CD4-positive, alpha-beta T cell (primary cell): ENCODE measurements at regions of chr4 and their contacts with region 1.

Region 1: GRCh38 chr4:99413140-99413539 is 22.0 kb downstream of the ADH7 start:
- DNase-seq: no peak
- ATAC-seq: no peak
- H3K4me3 ChIP-seq: no peak overlapping the region
- H3K4me3 Mint-ChIP-seq: no peak overlapping the region
- H3K27ac ChIP-seq: no peak overlapping the region
- H3K27ac Mint-ChIP-seq: no peak overlapping the region
- H3K4me1 ChIP-seq: no peaks in the 10 kb centered on the region
- H3K4me1 Mint-ChIP-seq: no peaks in the 10 kb centered on the region
- H3K27me3 ChIP-seq: no peaks in the 10 kb centered on the region
- H3K27me3 Mint-ChIP-seq: no peaks in the 10 kb centered on the region
- CTCF ChIP-seq: no peak

Region 2: GRCh38 chr4:98166025-98166730 is 1247.0 kb before region 1 on chr4:
- CTCF ChIA-PET with region 1: no interaction called
- POLR2A ChIA-PET with region 1: no interaction called
- intact Hi-C with region 1: no loop called
- DNase-seq: no peak
- ATAC-seq: no peak
- H3K4me3 ChIP-seq: no peak overlapping the region
- H3K4me3 Mint-ChIP-seq: no peak overlapping the region
- H3K27ac ChIP-seq: no peak overlapping the region
- H3K27ac Mint-ChIP-seq: no peak overlapping the region
- H3K4me1 ChIP-seq: no peaks in the 10 kb centered on the region
- H3K4me1 Mint-ChIP-seq: no peaks in the 10 kb centered on the region
- H3K27me3 ChIP-seq: no peaks in the 10 kb centered on the region
- H3K27me3 Mint-ChIP-seq: peaks cover 4% of the 10 kb centered on the region
- CTCF ChIP-seq: no peak

Region 3: DNA sequence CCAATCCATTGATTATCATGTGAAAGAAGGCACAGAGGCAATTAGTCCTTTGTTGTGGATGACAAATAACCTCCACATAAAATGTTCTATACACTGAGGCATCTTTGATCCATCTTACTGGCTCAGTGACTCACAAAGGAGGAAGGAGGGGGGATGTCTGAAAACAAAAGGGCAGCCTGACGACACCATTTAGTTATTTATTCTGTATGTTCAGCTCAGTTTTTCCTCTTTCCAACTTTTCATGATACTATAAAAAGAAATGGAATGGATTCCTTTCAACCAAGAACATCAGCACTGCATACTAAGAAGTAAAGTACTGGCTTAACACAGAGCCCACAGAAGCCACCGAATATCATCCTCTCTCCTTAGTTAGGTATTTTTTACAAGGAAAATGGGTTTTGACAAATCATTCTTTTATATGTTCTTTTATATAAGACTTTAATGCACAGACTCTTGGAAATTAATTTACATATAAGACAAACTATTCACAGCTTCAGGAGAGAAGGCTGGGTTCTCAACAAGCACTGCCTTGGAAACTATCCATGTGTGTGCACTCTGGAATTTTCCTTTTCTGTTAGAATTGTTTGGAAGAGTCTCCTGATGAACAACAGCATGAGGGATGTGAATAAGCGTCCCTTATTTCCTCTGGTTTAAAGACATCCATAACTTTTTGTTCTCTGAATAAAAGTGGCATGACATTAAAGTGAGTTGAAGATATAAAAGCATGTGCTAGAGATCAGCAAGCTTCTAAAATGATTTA is 890.3 kb before region 1 on chr4:
- CTCF ChIA-PET with region 1: no interaction called
- POLR2A ChIA-PET with region 1: no interaction called
- intact Hi-C with region 1: no loop called
- DNase-seq: no peak
- ATAC-seq: no peak
- H3K4me3 ChIP-seq: no peak overlapping the region
- H3K4me3 Mint-ChIP-seq: no peak overlapping the region
- H3K27ac ChIP-seq: no peak overlapping the region
- H3K27ac Mint-ChIP-seq: peak overlapping the region; percentile 54
- H3K4me1 ChIP-seq: peaks cover 10% of the 10 kb centered on the region
- H3K4me1 Mint-ChIP-seq: peaks cover 67% of the 10 kb centered on the region
- H3K27me3 ChIP-seq: no peaks in the 10 kb centered on the region
- H3K27me3 Mint-ChIP-seq: no peaks in the 10 kb centered on the region
- CTCF ChIP-seq: no peak

Region 4: GRCh38 chr4:99447079-99447478 is 33.9 kb after region 1 on chr4:
- CTCF ChIA-PET with region 1: no interaction called
- POLR2A ChIA-PET with region 1: no interaction called
- intact Hi-C with region 1: loop called in 1 of 2 experiments (anchors 1 kb)
- DNase-seq: no peak
- ATAC-seq: no peak
- H3K4me3 ChIP-seq: no peak overlapping the region
- H3K4me3 Mint-ChIP-seq: no peak overlapping the region
- H3K27ac ChIP-seq: no peak overlapping the region
- H3K27ac Mint-ChIP-seq: no peak overlapping the region
- H3K4me1 ChIP-seq: no peaks in the 10 kb centered on the region
- H3K4me1 Mint-ChIP-seq: no peaks in the 10 kb centered on the region
- H3K27me3 ChIP-seq: no peaks in the 10 kb centered on the region
- H3K27me3 Mint-ChIP-seq: peaks cover 7% of the 10 kb centered on the region
- CTCF ChIP-seq: no peak

Region 5: GRCh38 chr4:99490286-99490685 is 77.1 kb after region 1 on chr4:
- CTCF ChIA-PET with region 1: no interaction called
- POLR2A ChIA-PET with region 1: no interaction called
- intact Hi-C with region 1: no loop called
- DNase-seq: no peak
- ATAC-seq: no peak
- H3K4me3 ChIP-seq: no peak overlapping the region
- H3K4me3 Mint-ChIP-seq: no peak overlapping the region
- H3K27ac ChIP-seq: no peak overlapping the region
- H3K27ac Mint-ChIP-seq: no peak overlapping the region
- H3K4me1 ChIP-seq: no peaks in the 10 kb centered on the region
- H3K4me1 Mint-ChIP-seq: no peaks in the 10 kb centered on the region
- H3K27me3 ChIP-seq: no peaks in the 10 kb centered on the region
- H3K27me3 Mint-ChIP-seq: peaks cover 5% of the 10 kb centered on the region
- CTCF ChIP-seq: no peak